Prostate gland (tissue), 2 donors: ENCODE measurements at regions of chr1 and their contacts with region 1.

Region 1: DNA sequence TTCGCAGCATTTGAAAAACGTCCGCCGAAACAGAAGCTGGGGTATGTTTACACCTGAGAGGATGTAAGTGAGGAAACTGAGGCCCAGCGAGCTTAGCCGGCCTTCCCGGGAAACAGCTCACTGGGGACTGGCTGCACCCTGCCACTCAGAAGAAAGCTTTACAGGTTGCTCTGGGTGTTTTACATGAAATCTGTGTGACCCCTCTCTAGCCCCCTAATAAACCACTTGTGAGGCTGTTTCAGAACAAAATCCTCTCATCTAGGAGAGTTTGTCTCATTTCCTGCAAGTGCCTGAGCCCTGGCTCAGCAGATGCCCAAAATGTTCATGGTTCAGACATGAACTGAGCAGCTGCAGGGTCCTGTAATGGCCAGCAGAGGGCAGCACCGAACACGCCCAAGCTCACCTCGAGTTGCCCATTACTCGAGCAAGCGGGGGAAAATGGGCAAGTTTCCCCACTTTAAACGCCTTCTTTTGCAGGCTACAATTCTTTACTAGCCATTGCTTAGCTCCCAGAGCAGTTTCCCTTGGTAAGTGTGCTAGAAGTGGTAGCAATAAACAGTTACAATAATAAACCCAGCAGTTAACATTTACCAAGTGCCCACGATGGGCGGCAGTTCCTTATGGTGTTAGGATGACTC is 76.4 kb downstream of the FHAD1 start:
- DNase-seq: peak; percentile 75
- H3K4me3 ChIP-seq: no peak overlapping the region
- H3K27ac ChIP-seq: no peak overlapping the region
- H3K4me1 ChIP-seq: no peaks in the 10 kb centered on the region
- H3K27me3 ChIP-seq: no peaks in the 10 kb centered on the region
- CTCF ChIP-seq: peak; percentile 97 to 99 (median 98)
- POLR2A ChIP-seq: no peak

Region 2: GRCh38 chr1:14939527-14940284 is 383.8 kb before region 1 on chr1:
- intact Hi-C with region 1: no loop called
- DNase-seq: no peak
- H3K4me3 ChIP-seq: no peak overlapping the region
- H3K27ac ChIP-seq: no peak overlapping the region
- H3K4me1 ChIP-seq: peaks cover 7% of the 10 kb centered on the region
- H3K27me3 ChIP-seq: no peaks in the 10 kb centered on the region
- CTCF ChIP-seq: no peak
- POLR2A ChIP-seq: no peak

Region 3: GRCh38 chr1:15261155-15262002 is 62.1 kb before region 1 on chr1:
- intact Hi-C with region 1: no loop called
- DNase-seq: no peak
- H3K4me3 ChIP-seq: no peak overlapping the region
- H3K27ac ChIP-seq: peak overlapping the region in 1 of 2 donors; percentile 30
- H3K4me1 ChIP-seq: no peaks in the 10 kb centered on the region
- H3K27me3 ChIP-seq: no peaks in the 10 kb centered on the region
- CTCF ChIP-seq: no peak
- POLR2A ChIP-seq: no peak

Region 4: DNA sequence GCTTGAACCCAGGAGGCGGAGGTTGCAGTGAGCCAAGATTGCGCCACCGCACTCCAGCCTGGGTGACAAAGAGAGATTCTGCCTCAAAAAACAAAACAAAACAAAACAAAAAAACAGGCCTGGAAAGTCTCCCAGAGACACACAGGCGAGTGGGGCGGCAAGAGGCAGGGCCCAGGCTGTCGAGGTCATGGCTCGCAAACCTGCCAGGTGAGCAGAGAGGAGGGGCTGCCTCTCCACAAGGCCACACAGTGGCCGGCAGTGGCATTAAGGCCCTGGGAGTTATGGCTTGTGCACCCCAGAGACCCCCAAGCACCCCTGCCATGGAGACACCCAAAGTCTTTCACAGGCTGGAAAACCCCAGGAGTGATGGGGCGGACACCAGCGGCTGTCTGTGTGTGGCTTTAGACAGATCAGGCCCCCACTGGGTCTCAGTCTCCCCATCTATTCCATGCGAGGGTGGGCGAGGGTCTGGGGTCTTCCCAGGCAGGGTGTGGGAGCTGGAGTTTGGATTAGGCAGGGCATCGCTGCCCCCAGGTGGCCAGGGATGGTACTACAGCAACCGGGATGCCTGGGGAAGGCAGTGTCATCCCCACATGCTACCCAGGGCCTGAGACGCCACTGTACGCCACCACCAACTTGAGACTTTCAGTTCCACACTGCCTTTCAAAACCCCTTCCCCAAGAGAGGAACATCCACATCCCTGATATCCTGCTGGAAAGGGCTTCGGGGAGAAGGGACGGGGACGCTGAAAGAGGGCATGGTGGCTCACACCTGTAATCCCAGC is 107.5 kb after region 1 on chr1:
- intact Hi-C with region 1: loop called (anchors 1 kb)
- DNase-seq: peak; percentile 57
- H3K4me3 ChIP-seq: no peak overlapping the region
- H3K27ac ChIP-seq: no peak overlapping the region
- H3K4me1 ChIP-seq: no peaks in the 10 kb centered on the region
- H3K27me3 ChIP-seq: no peaks in the 10 kb centered on the region
- CTCF ChIP-seq: peak; percentile 86 to 97 (median 93)
- POLR2A ChIP-seq: no peak